SK-MEL-5 (cell line): ENCODE measurements at regions of chr22 and their contacts with region 1.

Region 1: DNA sequence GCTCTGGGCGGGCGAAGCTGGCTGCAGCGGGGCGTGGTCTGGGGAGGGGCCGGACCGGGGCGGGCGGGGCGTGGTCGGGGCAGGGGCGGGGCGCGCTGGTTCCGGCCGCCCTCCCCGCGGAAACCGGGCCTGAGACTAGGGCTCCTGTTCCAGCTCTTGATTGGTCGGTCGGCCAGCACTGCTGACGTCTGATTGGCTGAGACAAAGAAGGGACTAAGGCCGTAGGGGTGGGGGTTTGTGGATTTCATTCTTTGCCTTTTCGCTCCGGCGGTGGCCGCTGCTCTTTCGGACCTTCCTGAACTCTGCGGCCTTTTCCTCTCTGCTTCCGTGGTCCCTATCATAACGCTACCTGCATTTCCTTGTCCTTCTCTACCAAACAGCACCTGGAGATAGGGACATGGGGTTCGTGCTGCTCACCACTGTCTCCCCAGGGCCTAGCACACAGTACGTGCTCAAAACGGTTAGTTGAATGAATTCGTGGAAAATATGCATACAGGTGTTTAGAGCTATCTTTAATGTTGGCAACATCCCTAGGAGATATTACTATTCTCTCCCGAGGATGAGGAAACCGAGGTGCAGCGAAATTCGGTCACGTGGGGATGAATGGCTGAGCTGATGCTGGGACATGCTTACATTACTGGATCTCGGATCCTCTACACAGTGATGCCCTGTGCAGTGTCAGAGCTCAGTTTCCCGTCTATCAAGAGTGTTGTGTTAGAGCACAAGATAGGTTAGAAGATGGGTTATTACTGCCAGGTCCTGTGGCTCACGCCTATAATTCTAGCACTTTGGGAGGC is 62.8 kb downstream of the NFAM1 start:
- DNase-seq: peak; percentile 97

Region 2: GRCh38 chr22:42270512-42271417 is 98.7 kb before region 1 on chr22 and contains the start of gene TCF20:
- in situ Hi-C with region 1: loop called (anchors 25 kb)
- DNase-seq: peak; percentile 81
- total RNA-seq, gene TCF20: 36.3 and 38.7 TPM in 2 replicates

Region 3: GRCh38 chr22:42837556-42837955 is 468.1 kb after region 1 on chr22:
- in situ Hi-C with region 1: no loop called
- DNase-seq: no peak